A673 (cell line): ENCODE measurements at regions of chr9 and their contacts with region 1.

Region 1: DNA sequence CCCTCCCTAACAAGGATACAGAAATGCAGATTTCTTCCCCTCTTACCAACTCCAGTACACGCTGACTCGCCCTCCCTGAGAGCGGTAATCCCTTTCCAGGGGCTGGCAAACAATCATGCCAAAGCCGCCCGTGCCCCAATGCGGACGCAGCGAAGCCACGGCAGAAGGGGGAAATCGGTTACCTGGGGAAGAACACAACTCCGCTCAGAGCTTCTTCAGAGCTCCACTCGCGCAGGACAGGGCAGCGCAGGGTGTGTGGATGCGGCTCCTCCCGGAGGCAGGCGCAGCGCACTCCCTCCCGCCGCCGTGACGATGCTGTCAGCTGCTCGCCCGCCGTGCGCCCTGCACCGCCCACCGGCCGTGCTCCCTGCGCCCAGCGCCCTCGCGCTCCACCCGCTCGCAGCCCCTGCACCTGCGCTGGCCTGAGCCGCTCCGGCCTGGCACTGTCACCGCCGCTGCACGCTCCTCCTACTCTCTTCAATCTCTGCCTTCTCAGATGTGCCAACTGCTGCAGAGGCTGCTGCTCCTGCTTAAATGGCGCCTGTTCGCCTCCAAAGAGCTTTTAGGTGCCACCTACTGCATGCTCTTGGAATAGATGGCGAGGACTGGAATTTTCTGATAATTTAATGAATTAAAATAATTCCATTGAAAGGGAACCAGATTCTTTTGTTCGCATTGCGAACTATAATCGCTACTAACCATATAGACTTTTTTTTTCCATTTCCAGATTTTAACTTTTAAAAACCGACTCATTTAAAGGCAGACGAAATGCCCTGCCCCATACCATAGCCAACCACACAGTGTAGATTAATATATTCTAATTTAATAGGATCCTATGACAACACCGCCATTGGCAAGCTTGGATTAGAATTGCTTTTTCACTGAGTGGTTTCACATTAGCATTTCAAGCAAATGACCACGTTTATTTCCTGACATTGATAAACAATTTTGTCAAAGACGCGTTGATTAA is at the start of gene DIRAS2:
- DNase-seq: peak; percentile 67
- H3K4me3 ChIP-seq: peak within 1 kb of the TSS; percentile 43
- H3K27ac ChIP-seq: no peak within 1 kb of the TSS
- H3K4me1 ChIP-seq: no peaks in the 10 kb centered on the region
- H3K27me3 ChIP-seq: peaks cover 32% of the 10 kb centered on the region
- CTCF ChIP-seq: peak; percentile 61
- total RNA-seq, gene DIRAS2: not detected in 2 replicates

Region 2: DNA sequence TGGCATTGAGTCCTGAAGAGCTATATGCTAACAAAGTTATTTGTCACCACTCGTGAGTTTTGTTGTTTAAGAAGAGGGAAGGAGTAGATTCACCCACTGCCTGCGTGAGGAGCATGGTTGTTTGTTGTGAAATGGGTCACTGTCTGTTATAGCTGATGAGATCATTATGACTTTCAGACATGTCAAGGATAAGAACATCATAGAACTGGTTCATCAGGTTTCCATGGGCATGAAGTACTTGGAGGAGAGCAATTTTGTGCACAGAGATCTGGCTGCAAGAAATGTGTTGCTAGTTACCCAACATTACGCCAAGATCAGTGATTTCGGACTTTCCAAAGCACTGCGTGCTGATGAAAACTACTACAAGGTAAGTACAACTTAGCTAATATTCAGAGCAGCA is 235.7 kb after region 1 on chr9:
- CTCF ChIA-PET with region 1: no interaction called
- POLR2A ChIA-PET with region 1: no interaction called
- intact Hi-C with region 1: loop called (anchors 5 kb)
- DNase-seq: no peak
- H3K4me3 ChIP-seq: no peak overlapping the region
- H3K27ac ChIP-seq: no peak overlapping the region
- H3K4me1 ChIP-seq: no peaks in the 10 kb centered on the region
- H3K27me3 ChIP-seq: no peaks in the 10 kb centered on the region
- CTCF ChIP-seq: no peak

Region 3: GRCh38 chr9:90991953-90992352 is 349.1 kb after region 1 on chr9:
- CTCF ChIA-PET with region 1: no interaction called
- POLR2A ChIA-PET with region 1: no interaction called
- intact Hi-C with region 1: no loop called
- DNase-seq: no peak
- H3K4me3 ChIP-seq: no peak overlapping the region
- H3K27ac ChIP-seq: no peak overlapping the region
- H3K4me1 ChIP-seq: no peaks in the 10 kb centered on the region
- H3K27me3 ChIP-seq: no peaks in the 10 kb centered on the region
- CTCF ChIP-seq: no peak